CD8-positive, alpha-beta T cell (primary cell): ENCODE measurements at regions of chr2 and their contacts with region 1.

Region 1: DNA sequence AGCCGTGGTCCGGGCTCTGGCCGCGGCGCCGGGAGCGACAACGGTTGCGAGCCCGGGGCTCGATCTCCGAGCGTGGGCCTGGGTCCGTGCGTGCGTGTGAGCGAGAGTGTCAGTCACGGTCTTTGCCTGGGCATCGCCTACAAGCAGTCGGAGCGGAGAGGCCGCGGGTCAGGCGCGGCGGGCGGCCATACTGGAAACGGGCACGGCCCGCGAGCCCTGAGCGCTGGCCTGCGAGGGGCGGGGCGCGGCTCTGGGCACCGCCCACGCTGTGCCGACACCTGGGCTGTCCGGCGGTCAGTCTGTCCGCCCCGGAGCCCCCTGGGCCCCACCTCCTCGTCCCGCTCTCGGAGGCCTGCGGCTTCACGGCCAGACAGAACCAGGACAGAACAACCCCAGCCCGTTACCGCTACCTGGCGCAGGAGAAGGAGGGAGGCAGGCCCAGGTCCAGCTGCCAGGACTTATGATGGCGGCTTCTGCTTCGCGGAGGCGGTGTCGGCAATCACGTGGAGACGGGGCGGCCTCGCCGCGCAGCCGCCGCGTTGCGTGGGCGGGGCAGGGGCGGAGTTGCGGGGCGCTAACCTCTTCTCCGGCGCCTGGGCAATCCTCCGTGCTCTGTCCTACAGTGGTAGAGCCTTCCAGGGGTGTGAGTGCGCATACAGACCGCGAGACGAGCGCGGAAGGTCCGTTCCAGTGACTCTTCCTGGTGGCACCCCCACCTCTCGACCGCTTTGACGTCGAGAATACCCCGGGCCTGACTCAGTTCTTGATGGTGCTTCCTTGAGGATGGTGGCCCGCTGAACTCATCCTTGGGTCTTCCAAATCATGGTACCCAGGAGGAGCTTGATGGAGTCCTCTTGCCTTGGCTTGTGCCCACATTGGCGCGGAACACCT is at the start of gene TMEM131:
- DNase-seq: peak; percentile 92 to 97 (median 96)
- ATAC-seq: peak; percentile 82
- H3K4me3 ChIP-seq: peak within 1 kb of the TSS; percentile 68 to 95
- H3K4me3 Mint-ChIP-seq: peak within 1 kb of the TSS; percentile 90
- H3K27ac ChIP-seq: peak within 1 kb of the TSS; percentile 82 to 87
- H3K27ac Mint-ChIP-seq: peak within 1 kb of the TSS; percentile 97
- H3K4me1 ChIP-seq: peaks cover 36% of the 10 kb centered on the region
- H3K4me1 Mint-ChIP-seq: peaks cover 43% of the 10 kb centered on the region
- H3K27me3 ChIP-seq: no peaks in the 10 kb centered on the region
- H3K27me3 Mint-ChIP-seq: no peaks in the 10 kb centered on the region
- CTCF ChIP-seq: no peak
- total RNA-seq, gene TMEM131: 26.8 to 31.5 TPM

Region 2: DNA sequence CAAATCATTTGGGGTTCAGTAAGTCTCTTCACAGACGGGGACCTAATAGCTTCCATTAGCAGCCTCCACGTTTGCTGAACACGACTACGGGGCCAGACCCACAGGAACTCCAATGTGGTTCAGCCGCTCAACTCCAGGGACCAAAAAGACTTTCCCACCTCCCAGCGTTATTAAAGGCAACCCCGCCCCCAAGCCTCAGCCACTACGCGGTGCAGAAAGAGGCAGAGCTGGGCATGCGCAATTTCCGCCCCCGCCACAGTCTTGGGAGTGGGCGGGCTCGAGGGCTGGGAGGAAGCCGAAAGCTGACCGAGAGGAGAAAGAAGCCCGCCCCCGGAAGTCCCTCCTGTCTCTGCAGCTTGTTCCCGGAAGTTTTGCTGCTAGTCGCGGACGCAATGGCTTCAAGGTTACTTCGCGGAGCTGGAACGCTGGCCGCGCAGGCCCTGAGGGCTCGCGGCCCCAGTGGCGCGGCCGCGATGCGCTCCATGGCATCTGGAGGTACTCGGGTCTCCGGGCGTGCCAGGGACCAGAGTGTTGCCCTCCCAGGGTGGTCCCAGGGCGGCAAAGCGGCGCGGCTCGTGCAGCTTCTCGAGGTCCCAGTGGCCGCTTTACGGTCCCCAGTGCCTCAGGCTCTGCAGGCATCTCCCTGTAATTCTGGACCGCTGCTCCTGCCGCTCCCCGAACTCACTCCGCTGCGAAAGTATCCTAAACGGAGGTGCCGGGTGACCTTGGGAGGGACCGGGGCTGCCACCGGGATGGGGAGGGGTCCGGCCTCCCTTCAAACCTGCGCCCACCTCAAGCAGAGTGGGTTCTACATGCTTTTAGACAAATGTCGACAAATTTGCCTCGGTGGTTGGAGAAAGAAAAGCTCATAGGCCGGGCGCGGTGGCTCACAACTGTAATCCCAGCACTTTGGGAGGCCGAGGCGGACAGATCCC is 350.0 kb before region 1 on chr2 and contains the start of gene COX5B:
- CTCF ChIA-PET with region 1: no interaction called
- POLR2A ChIA-PET with region 1: no interaction called
- intact Hi-C with region 1: loop called in 1 of 2 experiments (anchors 5 kb)
- DNase-seq: peak; percentile 97 to 99 (median 99)
- ATAC-seq: peak; percentile 97
- H3K4me3 ChIP-seq: peak within 1 kb of the TSS; percentile 94 to 97
- H3K4me3 Mint-ChIP-seq: peak within 1 kb of the TSS; percentile 91
- H3K27ac ChIP-seq: peak within 1 kb of the TSS; percentile 83 to 90
- H3K27ac Mint-ChIP-seq: peak within 1 kb of the TSS; percentile 95
- H3K4me1 ChIP-seq: peaks cover 20% of the 10 kb centered on the region
- H3K4me1 Mint-ChIP-seq: peaks cover 20% of the 10 kb centered on the region
- H3K27me3 ChIP-seq: no peaks in the 10 kb centered on the region
- H3K27me3 Mint-ChIP-seq: no peaks in the 10 kb centered on the region
- CTCF ChIP-seq: no peak
- total RNA-seq, gene COX5B: 115 to 117 TPM

Region 3: GRCh38 chr2:97718051-97718882 is 277.7 kb before region 1 on chr2:
- CTCF ChIA-PET with region 1: no interaction called
- POLR2A ChIA-PET with region 1: no interaction called
- intact Hi-C with region 1: loop called (anchors 5 to 10 kb)
- DNase-seq: peak; percentile 58 to 90 (median 80)
- ATAC-seq: peak; percentile 76
- H3K4me3 ChIP-seq: peak overlapping the region; percentile 68 to 91
- H3K4me3 Mint-ChIP-seq: peak overlapping the region; percentile 96
- H3K27ac ChIP-seq: peak overlapping the region; percentile 80 to 88
- H3K27ac Mint-ChIP-seq: peak overlapping the region; percentile 97
- H3K4me1 ChIP-seq: peaks cover 80% of the 10 kb centered on the region
- H3K4me1 Mint-ChIP-seq: peaks cover 85% of the 10 kb centered on the region
- H3K27me3 ChIP-seq: no peaks in the 10 kb centered on the region
- H3K27me3 Mint-ChIP-seq: no peaks in the 10 kb centered on the region
- CTCF ChIP-seq: no peak

Region 4: GRCh38 chr2:98455494-98455976 is 459.6 kb after region 1 on chr2:
- CTCF ChIA-PET with region 1: no interaction called
- POLR2A ChIA-PET with region 1: no interaction called
- intact Hi-C with region 1: loop called in 1 of 2 experiments (anchors 10 kb)
- DNase-seq: peak in 4 of 9 experiments; percentile 39 to 84 (median 60)
- ATAC-seq: peak; percentile 56
- H3K4me3 ChIP-seq: no peak overlapping the region
- H3K4me3 Mint-ChIP-seq: peak overlapping the region; percentile 56
- H3K27ac ChIP-seq: peak overlapping the region; percentile 63 to 76
- H3K27ac Mint-ChIP-seq: peak overlapping the region; percentile 92
- H3K4me1 ChIP-seq: peaks cover 98% of the 10 kb centered on the region
- H3K4me1 Mint-ChIP-seq: peaks cover 94% of the 10 kb centered on the region
- H3K27me3 ChIP-seq: no peaks in the 10 kb centered on the region
- H3K27me3 Mint-ChIP-seq: no peaks in the 10 kb centered on the region
- CTCF ChIP-seq: no peak

Region 5: DNA sequence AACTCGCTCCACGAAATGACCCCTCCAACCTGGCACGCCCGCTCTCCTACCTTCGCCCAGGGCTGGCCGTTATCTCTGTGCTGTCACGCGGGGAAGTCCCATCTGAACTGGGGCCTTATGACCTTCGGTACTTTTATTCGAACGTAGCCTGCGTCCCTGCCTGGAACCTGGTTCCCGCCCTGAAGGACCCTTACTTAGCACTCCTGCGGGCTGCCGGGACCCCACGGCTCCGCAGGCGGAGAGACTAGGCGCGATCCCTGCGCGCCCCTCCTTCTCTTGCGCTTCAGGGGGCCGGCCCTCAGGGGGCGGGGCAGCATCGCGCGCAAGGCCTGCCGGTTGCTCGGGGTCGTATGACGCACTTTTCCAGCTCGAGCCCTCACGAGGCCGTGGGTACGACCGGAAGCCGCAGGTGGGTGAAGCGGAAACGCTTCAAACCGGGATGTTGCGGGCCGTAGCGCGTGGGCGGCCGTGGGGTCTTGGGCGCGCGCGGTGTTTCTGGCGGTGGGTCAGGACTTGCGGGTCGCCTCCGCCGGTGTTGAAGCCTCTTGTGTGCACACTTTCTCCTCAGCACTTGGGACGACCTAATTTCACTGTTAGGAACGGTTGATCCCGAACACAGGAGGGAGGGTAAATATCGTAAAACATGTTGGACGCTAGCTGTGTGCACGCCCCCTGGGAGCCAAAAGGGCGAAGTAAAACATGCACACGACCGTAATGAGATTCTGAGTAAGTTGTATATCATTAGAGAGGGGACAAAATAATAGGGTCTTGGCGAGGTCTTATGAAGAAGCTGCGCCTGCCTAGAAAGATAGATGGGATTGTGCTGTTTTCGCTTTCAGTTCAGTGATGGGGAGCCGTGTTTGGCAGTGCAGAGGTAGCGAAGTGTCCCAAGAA is 1158.9 kb after region 1 on chr2 and contains the starts of genes LIPT1 and TSGA10:
- CTCF ChIA-PET with region 1: no interaction called
- POLR2A ChIA-PET with region 1: no interaction called
- intact Hi-C with region 1: loop called (anchors 5 to 10 kb)
- DNase-seq: peak; percentile 81 to 98 (median 93)
- ATAC-seq: peak; percentile 94
- H3K4me3 ChIP-seq: peak within 1 kb of the TSS; percentile 80 to 92
- H3K4me3 Mint-ChIP-seq: peak within 1 kb of the TSS; percentile 84
- H3K27ac ChIP-seq: peak within 1 kb of the TSS; percentile 95 to 96
- H3K27ac Mint-ChIP-seq: no peak within 1 kb of the TSS
- H3K4me1 ChIP-seq: peaks cover 28% of the 10 kb centered on the region
- H3K4me1 Mint-ChIP-seq: peaks cover 31% of the 10 kb centered on the region
- H3K27me3 ChIP-seq: no peaks in the 10 kb centered on the region
- H3K27me3 Mint-ChIP-seq: no peaks in the 10 kb centered on the region
- CTCF ChIP-seq: no peak
- total RNA-seq, gene LIPT1: 9.7 to 11.0 TPM
- total RNA-seq, gene TSGA10: 14.4 to 14.9 TPM